Activated T-helper 2 cell treated with anti-CD3 and anti-CD28 coated beads, Interferon-gamma antibody, Interleukin-2, Interleukin-4, amounts not matched to agents 10 μg/mL and 5 μg/mL and 100 μg/mL, durations not matched to agents 14 hours and 24 hours and 36 hours (primary cell): ENCODE measurements at regions of chr18 and their contacts with region 1.

Region 1: DNA sequence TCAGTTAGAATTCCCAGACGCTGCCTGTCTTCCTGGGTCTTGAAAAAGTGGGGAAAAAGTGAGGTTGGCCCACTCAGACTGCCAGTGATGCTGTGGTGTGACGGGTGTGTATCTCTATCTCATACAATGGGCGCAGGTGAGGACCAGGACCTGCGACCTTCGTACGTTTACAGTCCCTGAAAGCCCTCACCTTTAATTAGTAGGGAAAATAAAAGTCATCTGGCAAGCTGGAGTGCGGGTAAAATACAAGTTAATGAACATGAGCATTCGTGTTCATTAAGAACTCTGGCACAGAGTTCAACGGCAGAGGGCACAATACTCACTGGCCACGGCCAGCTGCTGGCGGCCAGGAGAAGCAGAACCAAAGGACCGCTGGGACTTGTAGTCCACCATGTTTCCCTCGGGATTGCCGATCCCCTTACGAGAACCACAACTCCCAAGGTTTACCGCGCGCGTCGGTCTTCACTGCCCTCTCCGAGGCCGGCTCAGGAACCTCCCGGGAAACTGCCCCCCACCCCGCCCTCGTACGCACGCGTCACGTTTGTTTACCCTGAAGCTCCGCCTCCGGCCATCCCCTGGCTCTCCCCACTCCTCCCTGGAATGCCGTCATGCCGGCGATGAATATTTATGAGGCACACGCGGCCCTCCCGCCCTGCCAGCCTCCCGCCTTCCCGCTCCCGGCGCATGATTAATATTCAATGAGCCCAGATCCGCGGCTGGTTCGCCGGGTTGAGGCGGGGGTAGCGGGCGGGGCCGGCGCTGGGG is 488 bp upstream of the PHLPP1 start:
- DNase-seq: peak; percentile 90
- H3K4me3 Mint-ChIP-seq: peak overlapping the region; percentile 80
- H3K27ac Mint-ChIP-seq: peak overlapping the region; percentile 76
- H3K4me1 Mint-ChIP-seq: peaks cover 30% of the 10 kb centered on the region
- H3K27me3 Mint-ChIP-seq: peaks cover 12% of the 10 kb centered on the region

Region 2: GRCh38 chr18:62425465-62426195 is 289.2 kb before region 1 on chr18:
- intact Hi-C with region 1: loop called (anchors 2 kb)
- DNase-seq: peak; percentile 55
- H3K4me3 Mint-ChIP-seq: peak overlapping the region; percentile 44
- H3K27ac Mint-ChIP-seq: peak overlapping the region; percentile 72
- H3K4me1 Mint-ChIP-seq: peaks cover 40% of the 10 kb centered on the region
- H3K27me3 Mint-ChIP-seq: no peaks in the 10 kb centered on the region

Region 3: GRCh38 chr18:62479574-62479973 is 235.3 kb before region 1 on chr18:
- intact Hi-C with region 1: no loop called
- DNase-seq: no peak
- H3K4me3 Mint-ChIP-seq: no peak overlapping the region
- H3K27ac Mint-ChIP-seq: no peak overlapping the region
- H3K4me1 Mint-ChIP-seq: no peaks in the 10 kb centered on the region
- H3K27me3 Mint-ChIP-seq: peaks cover 17% of the 10 kb centered on the region

Region 4: GRCh38 chr18:62522504-62523254 is 192.2 kb before region 1 on chr18 and contains the start of gene ZCCHC2:
- intact Hi-C with region 1: loop called (anchors 2 kb)
- DNase-seq: peak; percentile 99
- H3K4me3 Mint-ChIP-seq: peak within 1 kb of the TSS; percentile 95
- H3K27ac Mint-ChIP-seq: peak within 1 kb of the TSS; percentile 88
- H3K4me1 Mint-ChIP-seq: peaks cover 29% of the 10 kb centered on the region
- H3K27me3 Mint-ChIP-seq: no peaks in the 10 kb centered on the region
- total RNA-seq, gene ZCCHC2: 43.8 and 48.6 TPM in 2 replicates

Region 5: DNA sequence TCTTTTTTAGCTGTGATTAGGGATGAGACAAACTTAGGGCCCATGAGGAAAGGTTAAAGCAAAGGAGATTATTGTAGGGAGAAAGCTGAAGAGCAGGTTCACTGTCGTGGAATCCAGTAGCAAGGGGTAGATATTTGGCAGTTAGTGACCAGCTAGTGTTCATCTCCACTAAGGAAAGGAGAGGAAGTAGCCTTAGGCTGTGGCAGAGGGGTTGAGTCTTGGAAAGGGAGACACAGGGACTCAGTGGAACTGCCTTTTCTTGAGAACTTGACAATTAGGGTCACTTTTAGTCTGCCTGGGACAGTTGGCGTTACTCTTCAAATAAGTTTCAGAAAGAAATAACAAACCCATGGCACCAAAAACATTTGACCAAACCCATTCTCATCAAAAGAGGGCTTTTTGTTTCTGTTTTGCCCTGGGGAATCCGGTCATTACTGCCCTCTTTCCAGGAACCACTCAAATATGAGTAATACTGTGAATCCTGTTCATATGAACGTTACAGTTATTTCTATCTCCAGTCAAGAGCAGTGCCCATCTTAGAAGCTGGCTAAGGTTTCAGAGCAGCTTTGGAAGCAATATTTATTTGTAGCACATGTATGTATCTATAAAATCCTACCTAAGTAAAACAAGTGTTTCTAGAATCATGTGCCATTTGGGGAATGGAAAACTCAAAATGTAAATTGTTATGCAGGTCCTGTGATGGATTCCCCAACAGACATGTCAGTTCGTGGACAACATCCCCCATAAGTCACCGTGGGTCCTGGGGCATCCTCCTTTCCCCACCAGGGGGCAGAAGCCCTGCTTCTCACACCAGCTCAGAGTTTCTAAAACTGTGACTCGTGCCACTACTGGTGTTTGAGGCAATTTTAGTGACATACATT is 76.8 kb before region 1 on chr18:
- intact Hi-C with region 1: loop called (anchors 5 kb)
- DNase-seq: peak; percentile 32
- H3K4me3 Mint-ChIP-seq: no peak overlapping the region
- H3K27ac Mint-ChIP-seq: peak overlapping the region; percentile 33
- H3K4me1 Mint-ChIP-seq: peaks cover 8% of the 10 kb centered on the region
- H3K27me3 Mint-ChIP-seq: peaks cover 20% of the 10 kb centered on the region

Region 6: DNA sequence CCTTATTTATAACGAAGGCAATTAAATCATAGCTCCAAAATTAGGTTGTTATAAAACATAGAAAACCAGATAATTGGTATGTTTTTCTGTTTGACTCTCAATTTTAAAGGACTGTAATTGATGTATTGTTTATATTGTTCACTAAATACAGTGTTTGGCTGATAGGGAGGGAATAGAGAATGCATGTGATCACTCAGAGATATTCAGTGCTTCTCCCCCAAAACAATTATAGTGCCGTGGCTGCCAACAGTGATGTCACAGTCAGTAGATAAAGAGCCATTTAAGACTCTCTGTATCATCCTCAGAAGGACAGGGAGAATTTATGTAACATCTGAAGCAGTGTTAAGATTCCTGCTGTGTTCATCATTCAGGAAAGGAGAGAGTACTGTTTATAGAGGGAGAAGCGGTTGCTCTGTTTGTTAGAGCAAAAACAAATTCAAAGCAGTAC is 70.1 kb after region 1 on chr18:
- intact Hi-C with region 1: loop called (anchors 1 kb)
- DNase-seq: no peak
- H3K4me3 Mint-ChIP-seq: peak overlapping the region; percentile 38
- H3K27ac Mint-ChIP-seq: peak overlapping the region; percentile 93
- H3K4me1 Mint-ChIP-seq: peaks cover 77% of the 10 kb centered on the region
- H3K27me3 Mint-ChIP-seq: no peaks in the 10 kb centered on the region

Region 7: GRCh38 chr18:62957885-62958472 is 243.1 kb after region 1 on chr18:
- intact Hi-C with region 1: loop called (anchors 1 kb)
- DNase-seq: peak; percentile 53
- H3K4me3 Mint-ChIP-seq: no peak overlapping the region
- H3K27ac Mint-ChIP-seq: no peak overlapping the region
- H3K4me1 Mint-ChIP-seq: peaks cover 21% of the 10 kb centered on the region
- H3K27me3 Mint-ChIP-seq: no peaks in the 10 kb centered on the region

Region 8: GRCh38 chr18:63422087-63422809 is 707.4 kb after region 1 on chr18 and contains the start of gene VPS4B:
- intact Hi-C with region 1: loop called (anchors 5 kb)
- DNase-seq: peak; percentile 100
- H3K4me3 Mint-ChIP-seq: peak within 1 kb of the TSS; percentile 89
- H3K27ac Mint-ChIP-seq: peak within 1 kb of the TSS; percentile 92
- H3K4me1 Mint-ChIP-seq: peaks cover 26% of the 10 kb centered on the region
- H3K27me3 Mint-ChIP-seq: peaks cover 2% of the 10 kb centered on the region
- total RNA-seq, gene VPS4B: 53.8 and 56.1 TPM in 2 replicates